Activated CD4-positive, alpha-beta T cell treated with anti-CD3 and anti-CD28 coated beads, Interleukin-2, amount 10 ng/mL, durations not matched to agents 7 days and 5 days (primary cell): ENCODE measurements at regions of chr1 and their contacts with region 1.

Region 1: DNA sequence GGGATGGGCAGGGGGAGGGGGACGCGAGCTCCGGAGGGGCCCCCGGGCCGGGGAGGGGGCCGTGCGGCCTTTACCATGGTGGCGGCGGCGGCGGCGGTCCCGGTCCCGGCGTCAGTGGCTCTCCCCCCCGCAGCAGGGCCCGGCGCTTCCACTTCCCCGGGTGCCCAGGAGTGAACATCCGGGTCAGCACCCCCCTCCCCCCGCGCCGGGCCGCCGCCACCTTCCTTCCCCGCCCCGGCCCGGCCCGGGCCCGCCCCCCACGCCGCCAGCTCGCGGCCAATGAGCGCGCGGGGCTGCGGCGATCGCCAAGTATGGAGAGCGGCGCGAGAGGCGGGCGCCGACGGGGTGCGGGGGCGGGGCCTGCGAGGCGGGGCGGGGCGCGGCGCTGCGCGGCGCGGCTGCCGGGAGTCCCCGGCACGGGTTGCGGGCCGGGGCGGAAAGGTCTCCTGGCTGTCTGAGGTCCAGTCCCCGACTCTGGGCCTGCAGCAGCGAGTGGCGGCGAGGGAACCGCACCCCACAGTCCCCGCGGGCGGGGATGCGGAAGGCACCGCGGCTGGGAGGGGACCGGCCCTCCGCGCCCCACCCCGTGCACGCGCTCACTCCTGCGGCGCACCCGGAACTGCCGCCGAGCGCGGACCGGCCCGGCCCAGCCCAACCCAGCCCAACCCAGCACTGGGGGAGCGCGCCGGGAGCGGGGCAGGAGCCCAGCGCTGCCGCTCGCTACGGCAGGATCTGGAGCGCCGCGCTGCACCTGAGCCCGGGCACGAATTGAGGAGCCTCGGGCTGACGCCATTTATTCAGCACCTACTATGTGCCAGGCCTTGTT is at the start of gene CAPZB:
- DNase-seq: peak; percentile 93
- H3K4me3 Mint-ChIP-seq: peak within 1 kb of the TSS; percentile 94
- H3K27ac Mint-ChIP-seq: peak within 1 kb of the TSS; percentile 94
- H3K4me1 Mint-ChIP-seq: peaks cover 57% of the 10 kb centered on the region
- H3K27me3 Mint-ChIP-seq: no peaks in the 10 kb centered on the region
- total RNA-seq, gene CAPZB: 529 to 567 TPM

Region 2: GRCh38 chr1:19468397-19468956 is 17.1 kb before region 1 on chr1:
- CTCF ChIA-PET with region 1: interaction called, 15 read pairs
- POLR2A ChIA-PET with region 1: interaction called, 5 read pairs
- DNase-seq: peak; percentile 81
- H3K4me3 Mint-ChIP-seq: peak overlapping the region; percentile 70
- H3K27ac Mint-ChIP-seq: peak overlapping the region; percentile 93
- H3K4me1 Mint-ChIP-seq: peaks cover 92% of the 10 kb centered on the region
- H3K27me3 Mint-ChIP-seq: no peaks in the 10 kb centered on the region

Region 3: GRCh38 chr1:19504796-19505692 is 19.5 kb after region 1 on chr1:
- CTCF ChIA-PET with region 1: interaction called, 17 read pairs
- POLR2A ChIA-PET with region 1: no interaction called
- DNase-seq: no peak
- H3K4me3 Mint-ChIP-seq: no peak overlapping the region
- H3K27ac Mint-ChIP-seq: no peak overlapping the region
- H3K4me1 Mint-ChIP-seq: peaks cover 30% of the 10 kb centered on the region
- H3K27me3 Mint-ChIP-seq: no peaks in the 10 kb centered on the region